Natural killer cell (primary cell): ENCODE measurements at regions of chr10 and their contacts with region 1.

Region 1: GRCh38 chr10:5442065-5442989 is 30.0 kb downstream of the NET1 start:
- DNase-seq: peak in 1 of 2 donors; percentile 78
- ATAC-seq: peak; percentile 50 to 66 (median 62)
- H3K4me3 ChIP-seq: no peak overlapping the region
- H3K4me3 Mint-ChIP-seq: no peak overlapping the region
- H3K27ac ChIP-seq: no peak overlapping the region
- H3K27ac Mint-ChIP-seq: no peak overlapping the region
- H3K4me1 ChIP-seq: peaks cover 6% of the 10 kb centered on the region
- H3K4me1 Mint-ChIP-seq: peaks cover 11 to 12% of the 10 kb centered on the region in 2 donors
- H3K27me3 ChIP-seq: no peaks in the 10 kb centered on the region
- H3K27me3 Mint-ChIP-seq: no peaks in the 10 kb centered on the region
- CTCF ChIP-seq: peak; percentile 92

Region 2: GRCh38 chr10:5623081-5623748 is 180.9 kb after region 1 on chr10:
- intact Hi-C with region 1: loop called (anchors 1 kb)
- DNase-seq: peak; percentile 59 to 85
- ATAC-seq: peak; percentile 83 to 98 (median 98)
- H3K4me3 ChIP-seq: no peak overlapping the region
- H3K4me3 Mint-ChIP-seq: no peak overlapping the region
- H3K27ac ChIP-seq: no peak overlapping the region
- H3K27ac Mint-ChIP-seq: no peak overlapping the region
- H3K4me1 ChIP-seq: peaks cover 6% of the 10 kb centered on the region
- H3K4me1 Mint-ChIP-seq: no peaks in the 10 kb centered on the region
- H3K27me3 ChIP-seq: no peaks in the 10 kb centered on the region
- H3K27me3 Mint-ChIP-seq: peaks cover 0 to 4% of the 10 kb centered on the region in 2 donors
- CTCF ChIP-seq: peak; percentile 71